CD14-positive monocyte (primary cell): ENCODE measurements at regions of chr3 and their contacts with region 1.

Region 1: GRCh38 chr3:132029182-132029902 is 5.5 kb downstream of the CPNE4 start:
- DNase-seq: peak; percentile 39 to 70 (median 67)
- H3K4me3 ChIP-seq: no peak overlapping the region
- H3K4me3 Mint-ChIP-seq: peak overlapping the region in 1 of 2 donors; percentile 13
- H3K27ac ChIP-seq: no peak overlapping the region
- H3K27ac Mint-ChIP-seq: no peak overlapping the region
- H3K4me1 ChIP-seq: peaks cover 2 to 9% of the 10 kb centered on the region in 2 donors
- H3K4me1 Mint-ChIP-seq: peaks cover 9% of the 10 kb centered on the region
- H3K27me3 ChIP-seq: peaks cover 25 to 44% of the 10 kb centered on the region in 2 donors
- H3K27me3 Mint-ChIP-seq: peaks cover 27 to 43% (median 33%) of the 10 kb centered on the region in 3 donors
- CTCF ChIP-seq: peak; percentile 93

Region 2: DNA sequence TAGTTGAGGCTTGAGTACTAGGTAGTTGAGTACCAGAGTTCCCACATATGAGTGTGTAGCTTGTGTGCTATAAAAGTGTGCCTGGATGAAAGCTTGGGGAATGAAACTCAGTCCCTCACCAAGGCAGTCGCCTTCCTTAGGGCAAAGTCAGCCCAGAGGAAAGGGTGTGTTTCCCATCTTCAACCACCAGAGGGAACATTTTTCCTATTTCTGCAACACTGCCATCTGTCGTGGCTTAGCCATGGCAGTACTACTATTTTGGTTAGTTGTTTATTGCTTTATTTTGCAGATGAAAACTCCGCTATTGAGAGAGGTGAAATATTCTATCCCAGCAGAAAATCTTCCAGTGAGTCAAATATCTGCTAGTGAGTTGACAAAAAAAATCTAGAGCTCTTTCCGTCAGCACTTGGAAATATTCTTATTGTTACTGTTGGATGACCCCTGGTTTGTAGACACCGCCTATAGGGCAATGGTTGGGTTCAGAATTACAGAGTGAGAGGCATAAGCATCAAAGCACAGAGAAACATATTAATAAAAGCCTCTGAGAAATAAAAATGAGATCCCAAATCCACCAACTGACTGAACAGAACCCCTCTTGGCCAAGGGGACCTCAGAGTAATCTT is 234.5 kb before region 1 on chr3:
- intact Hi-C with region 1: loop called (anchors 2 to 5 kb)
- DNase-seq: peak; percentile 31 to 52 (median 51)
- H3K4me3 ChIP-seq: no peak overlapping the region
- H3K4me3 Mint-ChIP-seq: no peak overlapping the region
- H3K27ac ChIP-seq: no peak overlapping the region
- H3K27ac Mint-ChIP-seq: no peak overlapping the region
- H3K4me1 ChIP-seq: peaks cover 10 to 11% of the 10 kb centered on the region in 2 donors
- H3K4me1 Mint-ChIP-seq: peaks cover 22% of the 10 kb centered on the region
- H3K27me3 ChIP-seq: no peaks in the 10 kb centered on the region
- H3K27me3 Mint-ChIP-seq: peaks cover 0 to 1% (median 0%) of the 10 kb centered on the region in 3 donors
- CTCF ChIP-seq: peak; percentile 91

Region 3: GRCh38 chr3:132117642-132118041 is 88.3 kb after region 1 on chr3:
- intact Hi-C with region 1: no loop called
- DNase-seq: no peak
- H3K4me3 ChIP-seq: no peak overlapping the region
- H3K4me3 Mint-ChIP-seq: no peak overlapping the region
- H3K27ac ChIP-seq: no peak overlapping the region
- H3K27ac Mint-ChIP-seq: no peak overlapping the region
- H3K4me1 ChIP-seq: no peaks in the 10 kb centered on the region
- H3K4me1 Mint-ChIP-seq: no peaks in the 10 kb centered on the region
- H3K27me3 ChIP-seq: no peaks in the 10 kb centered on the region
- H3K27me3 Mint-ChIP-seq: peaks cover 1 to 4% (median 2%) of the 10 kb centered on the region in 3 donors
- CTCF ChIP-seq: no peak

Region 4: DNA sequence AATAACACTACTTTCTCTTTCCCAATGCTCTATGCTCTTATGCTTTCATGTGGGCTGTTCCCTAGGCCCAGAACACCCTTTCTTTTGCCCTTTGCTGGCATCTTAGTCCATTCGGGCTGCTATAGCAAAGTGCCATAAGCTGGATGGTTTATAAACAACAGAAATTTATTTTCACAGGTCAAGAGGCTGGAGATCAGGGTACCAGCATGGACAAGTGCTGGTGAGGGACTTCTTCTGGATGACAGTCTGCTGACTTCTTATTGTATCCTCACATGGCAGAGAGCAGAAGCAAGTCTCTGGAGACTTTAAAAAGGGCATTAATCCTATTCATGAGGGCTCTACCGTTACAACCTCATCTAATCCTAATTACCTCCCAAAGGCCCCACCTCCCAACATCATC is 1004.7 kb after region 1 on chr3:
- intact Hi-C with region 1: no loop called
- DNase-seq: no peak
- H3K4me3 ChIP-seq: no peak overlapping the region
- H3K4me3 Mint-ChIP-seq: no peak overlapping the region
- H3K27ac ChIP-seq: no peak overlapping the region
- H3K27ac Mint-ChIP-seq: no peak overlapping the region
- H3K4me1 ChIP-seq: peaks cover 10% of the 10 kb centered on the region in 2 donors
- H3K4me1 Mint-ChIP-seq: peaks cover 9% of the 10 kb centered on the region
- H3K27me3 ChIP-seq: peaks cover 19 to 40% of the 10 kb centered on the region in 2 donors
- H3K27me3 Mint-ChIP-seq: peaks cover 21 to 43% (median 24%) of the 10 kb centered on the region in 3 donors
- CTCF ChIP-seq: no peak